Activated CD4-positive, alpha-beta T cell treated with anti-CD3 and anti-CD28 coated beads, Interleukin-2, amount 10 ng/mL, durations not matched to agents 7 days and 5 days (primary cell): ENCODE measurements at regions of chr13 and their contacts with region 1.

Region 1: GRCh38 chr13:25276748-25277147 is 10.5 kb downstream of the MTMR6 start:
- DNase-seq: no peak
- H3K4me3 Mint-ChIP-seq: no peak overlapping the region
- H3K27ac Mint-ChIP-seq: no peak overlapping the region
- H3K4me1 Mint-ChIP-seq: peaks cover 34% of the 10 kb centered on the region
- H3K27me3 Mint-ChIP-seq: no peaks in the 10 kb centered on the region

Region 2: GRCh38 chr13:24683838-24684599 is 592.7 kb before region 1 on chr13:
- CTCF ChIA-PET with region 1: no interaction called
- POLR2A ChIA-PET with region 1: no interaction called
- DNase-seq: peak; percentile 64
- H3K4me3 Mint-ChIP-seq: no peak overlapping the region
- H3K27ac Mint-ChIP-seq: no peak overlapping the region
- H3K4me1 Mint-ChIP-seq: peaks cover 32% of the 10 kb centered on the region
- H3K27me3 Mint-ChIP-seq: peaks cover 45% of the 10 kb centered on the region

Region 3: GRCh38 chr13:25286969-25287961 is 10.5 kb after region 1 on chr13 and contains the start of gene MTMR6:
- CTCF ChIA-PET with region 1: interaction called, 13 read pairs
- POLR2A ChIA-PET with region 1: no interaction called
- DNase-seq: peak; percentile 92
- H3K4me3 Mint-ChIP-seq: peak within 1 kb of the TSS; percentile 86
- H3K27ac Mint-ChIP-seq: peak within 1 kb of the TSS; percentile 97
- H3K4me1 Mint-ChIP-seq: peaks cover 46% of the 10 kb centered on the region
- H3K27me3 Mint-ChIP-seq: peaks cover 21% of the 10 kb centered on the region
- total RNA-seq, gene MTMR6: 20.9 to 21.1 TPM